ENCODE measurements at regions of chr1 and their contacts with region 1.

Region 1: DNA sequence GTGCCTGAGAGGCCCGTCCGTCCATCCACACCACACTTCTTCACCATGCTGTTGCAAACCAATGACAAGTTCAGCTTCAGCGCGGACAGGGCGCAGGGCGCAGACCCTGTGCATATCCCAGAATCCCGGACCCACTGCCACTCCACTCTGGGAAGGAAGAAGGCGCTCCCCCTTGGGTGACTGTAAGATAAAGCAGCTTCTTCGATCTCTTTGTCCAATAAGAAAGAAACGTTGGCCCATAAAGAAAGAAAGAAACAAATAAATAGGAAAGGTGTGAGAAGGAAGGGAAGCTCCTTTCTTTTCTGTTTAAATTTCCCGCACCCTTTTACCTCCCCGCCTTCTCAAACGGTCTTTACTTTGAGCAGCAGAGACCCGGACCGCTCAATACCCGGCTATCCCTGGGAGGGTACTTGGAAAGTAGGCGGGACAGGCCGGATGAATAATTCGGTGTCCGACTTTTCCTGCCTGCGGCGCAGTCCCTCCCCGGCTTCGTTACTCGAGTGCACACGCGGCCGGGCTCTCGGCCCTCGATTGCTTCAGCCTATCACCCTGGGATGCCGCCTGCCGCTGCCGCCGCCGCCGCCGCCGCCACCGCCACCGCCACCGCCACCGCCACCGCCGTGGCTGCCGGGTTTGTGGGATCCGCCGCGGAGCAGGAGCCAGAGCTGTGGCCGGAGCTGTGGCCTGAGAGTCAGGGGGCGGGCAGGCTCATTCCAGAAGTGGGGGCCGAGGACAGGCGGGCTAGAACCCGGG is 523 bp upstream of the RASAL2 start:
- DNase-seq: peak; percentile 90
- ATAC-seq: peak; percentile 66
- H3K4me3 ChIP-seq: peak overlapping the region; percentile 92 to 97 (median 96)
- H3K27ac ChIP-seq: peak overlapping the region; percentile 77
- H3K4me1 ChIP-seq: peaks cover 62% of the 10 kb centered on the region
- H3K27me3 ChIP-seq: no peaks in the 10 kb centered on the region; a peak in 1 of 5 replicates
- CTCF ChIP-seq: no peak
- EP300 ChIP-seq: no peak
- POLR2A ChIP-seq: peak; percentile 40 to 60; a peak in 3 of 4 replicates
- RAD21 ChIP-seq: no peak

Region 2: GRCh38 chr1:177984136-177984525 is 109.2 kb before region 1 on chr1:
- CTCF ChIA-PET with region 1: no interaction called
- POLR2A ChIA-PET with region 1: no interaction called
- in situ Hi-C with region 1: no loop called
- intact Hi-C with region 1: no loop called
- DNase-seq: peak; percentile 7
- ATAC-seq: no peak
- H3K4me3 ChIP-seq: no peak overlapping the region
- H3K27ac ChIP-seq: no peak overlapping the region
- H3K4me1 ChIP-seq: peaks cover 14% of the 10 kb centered on the region
- H3K27me3 ChIP-seq: no peaks in the 10 kb centered on the region
- CTCF ChIP-seq: no peak
- EP300 ChIP-seq: no peak
- POLR2A ChIP-seq: no peak
- RAD21 ChIP-seq: no peak

Region 3: GRCh38 chr1:178037503-178038253 is 55.7 kb before region 1 on chr1:
- CTCF ChIA-PET with region 1: no interaction called
- POLR2A ChIA-PET with region 1: interaction called, 8 read pairs
- in situ Hi-C with region 1: no loop called
- intact Hi-C with region 1: loop called (anchors 2 kb)
- DNase-seq: peak; percentile 67
- ATAC-seq: peak; percentile 99
- H3K4me3 ChIP-seq: peak overlapping the region; percentile 62 to 70 (median 67); a peak in 5 of 6 replicates
- H3K27ac ChIP-seq: peak overlapping the region; percentile 55
- H3K4me1 ChIP-seq: peaks cover 66% of the 10 kb centered on the region
- H3K27me3 ChIP-seq: no peaks in the 10 kb centered on the region
- CTCF ChIP-seq: peak; percentile 84
- EP300 ChIP-seq: no peak
- POLR2A ChIP-seq: peak in 1 of 2 experiments; percentile 76; a peak in 3 of 4 replicates
- RAD21 ChIP-seq: peak; percentile 90

Region 4: GRCh38 chr1:178126790-178127189 is 33.4 kb after region 1 on chr1:
- CTCF ChIA-PET with region 1: no interaction called
- POLR2A ChIA-PET with region 1: no interaction called
- in situ Hi-C with region 1: no loop called
- intact Hi-C with region 1: loop called (anchors 2 kb)
- DNase-seq: peak; percentile 80
- ATAC-seq: peak; percentile 98
- H3K4me3 ChIP-seq: peak overlapping the region in 1 of 3 experiments; percentile 4; a peak in 2 of 6 replicates
- H3K27ac ChIP-seq: peak overlapping the region; percentile 73
- H3K4me1 ChIP-seq: peaks cover 35% of the 10 kb centered on the region
- H3K27me3 ChIP-seq: no peaks in the 10 kb centered on the region
- CTCF ChIP-seq: no peak
- EP300 ChIP-seq: 0 out of 4 replicates have a peak, but pooled peaks of 1 of the 2 experiments have one; percentile 20
- POLR2A ChIP-seq: no peak
- RAD21 ChIP-seq: no peak

Region 5: GRCh38 chr1:178282949-178283367 is 189.6 kb after region 1 on chr1:
- CTCF ChIA-PET with region 1: no interaction called
- POLR2A ChIA-PET with region 1: no interaction called
- in situ Hi-C with region 1: no loop called
- intact Hi-C with region 1: loop called (anchors 10 kb)
- DNase-seq: peak; percentile 25
- ATAC-seq: no peak
- H3K4me3 ChIP-seq: no peak overlapping the region
- H3K27ac ChIP-seq: no peak overlapping the region
- H3K4me1 ChIP-seq: peaks cover 7% of the 10 kb centered on the region; the same call in 1 of the 2 replicates
- H3K27me3 ChIP-seq: no peaks in the 10 kb centered on the region
- CTCF ChIP-seq: peak; percentile 49
- EP300 ChIP-seq: no peak
- POLR2A ChIP-seq: no peak
- RAD21 ChIP-seq: no peak